ENCODE measurements at regions of chrX and their contacts with region 1.

Region 1: GRCh38 chrX:10189317-10190268 is 32.8 kb downstream of the CLCN4 start:
- DNase-seq: peak; percentile 79
- H3K4me3 ChIP-seq: no peak overlapping the region
- H3K27ac ChIP-seq: no peak overlapping the region
- H3K4me1 ChIP-seq: no peaks in the 10 kb centered on the region
- H3K27me3 ChIP-seq: no peaks in the 10 kb centered on the region
- CTCF ChIP-seq: peak; percentile 84

Region 2: DNA sequence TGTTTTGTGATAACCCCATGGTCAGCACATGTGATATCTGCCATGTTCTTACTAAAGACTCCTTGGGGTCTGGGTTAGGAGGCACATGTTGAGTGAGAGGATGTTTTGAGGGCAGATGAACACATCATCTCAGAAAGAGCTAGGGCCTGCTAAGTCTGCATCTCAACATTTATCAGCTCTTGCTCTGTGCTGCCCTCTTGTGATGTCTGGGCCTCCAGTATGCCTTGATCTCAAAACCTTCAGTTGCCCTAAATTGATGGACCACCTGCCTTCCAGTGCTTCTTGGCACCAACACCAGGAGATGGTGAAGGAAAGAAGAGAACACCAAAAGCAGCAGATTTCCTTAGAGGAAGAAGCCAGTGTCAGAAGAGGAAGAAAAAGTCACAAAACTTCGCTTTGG is 408.3 kb after region 1 on chrX:
- CTCF ChIA-PET with region 1: interaction called, 16 read pairs
- POLR2A ChIA-PET with region 1: no interaction called
- intact Hi-C with region 1: loop called (anchors 5 kb)
- DNase-seq: peak; percentile 55
- H3K4me3 ChIP-seq: no peak overlapping the region
- H3K27ac ChIP-seq: no peak overlapping the region
- H3K4me1 ChIP-seq: no peaks in the 10 kb centered on the region
- H3K27me3 ChIP-seq: no peaks in the 10 kb centered on the region
- CTCF ChIP-seq: peak; percentile 60

Region 3: DNA sequence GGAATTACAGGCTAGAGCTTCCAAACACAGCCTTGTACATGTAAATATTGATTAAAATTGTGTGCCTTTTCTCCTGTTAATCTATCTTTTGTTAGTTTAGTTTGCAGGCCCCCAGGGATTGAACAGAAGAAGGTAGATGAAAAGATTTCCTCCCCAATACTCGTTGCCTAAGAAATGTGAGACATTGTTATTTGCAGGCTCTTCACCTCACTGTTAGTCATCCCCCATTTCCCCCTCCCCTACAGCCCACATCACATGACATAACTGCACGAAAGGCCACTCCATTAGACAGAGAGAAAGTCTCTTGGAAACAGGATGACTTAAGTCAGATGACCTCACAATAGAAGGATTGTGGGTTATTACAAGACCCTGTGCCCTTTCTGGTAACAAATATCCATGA is 444.1 kb after region 1 on chrX:
- CTCF ChIA-PET with region 1: interaction called, 8 read pairs
- POLR2A ChIA-PET with region 1: no interaction called
- intact Hi-C with region 1: loop called (anchors 5 kb)
- DNase-seq: peak; percentile 45
- H3K4me3 ChIP-seq: no peak overlapping the region
- H3K27ac ChIP-seq: no peak overlapping the region
- H3K4me1 ChIP-seq: peaks cover 7% of the 10 kb centered on the region
- H3K27me3 ChIP-seq: no peaks in the 10 kb centered on the region
- CTCF ChIP-seq: no peak

Region 4: GRCh38 chrX:10769195-10769594 is 579.6 kb after region 1 on chrX:
- CTCF ChIA-PET with region 1: interaction called, 3 read pairs
- POLR2A ChIA-PET with region 1: no interaction called
- intact Hi-C with region 1: loop called (anchors 5 kb)
- DNase-seq: peak; percentile 69
- H3K4me3 ChIP-seq: peak overlapping the region; percentile 9
- H3K27ac ChIP-seq: no peak overlapping the region
- H3K4me1 ChIP-seq: no peaks in the 10 kb centered on the region
- H3K27me3 ChIP-seq: no peaks in the 10 kb centered on the region
- CTCF ChIP-seq: peak; percentile 67

Region 5: DNA sequence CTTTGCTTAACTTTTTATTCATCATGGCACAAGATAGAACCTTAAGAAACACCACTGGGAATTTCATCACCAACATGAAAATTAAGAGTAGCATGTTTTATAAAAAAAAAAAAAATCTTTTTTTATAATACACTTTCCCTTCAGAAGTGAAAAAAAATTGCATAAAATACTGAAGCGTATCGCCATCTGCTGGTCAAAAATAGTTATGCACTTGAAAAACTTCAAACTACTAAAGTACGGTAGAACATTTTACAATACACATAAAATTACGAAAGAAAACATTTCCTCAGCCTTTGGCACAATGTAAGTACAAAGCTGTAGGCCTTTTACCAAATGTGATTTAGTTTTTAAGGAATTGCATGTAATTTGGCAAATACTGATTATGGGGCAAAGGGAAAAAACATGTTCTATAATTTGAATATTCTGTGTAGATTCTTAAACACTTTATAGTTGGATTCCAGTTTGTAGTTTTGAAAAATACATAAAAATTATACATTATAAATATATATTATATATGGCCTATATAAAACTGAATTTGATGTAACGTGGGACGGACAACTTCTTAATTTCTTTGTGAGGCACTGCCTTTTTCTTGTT is 948.0 kb after region 1 on chrX:
- CTCF ChIA-PET with region 1: interaction called, 8 read pairs
- POLR2A ChIA-PET with region 1: no interaction called
- intact Hi-C with region 1: loop called (anchors 1 kb)
- DNase-seq: peak; percentile 49
- H3K4me3 ChIP-seq: no peak overlapping the region
- H3K27ac ChIP-seq: no peak overlapping the region
- H3K4me1 ChIP-seq: no peaks in the 10 kb centered on the region
- H3K27me3 ChIP-seq: no peaks in the 10 kb centered on the region
- CTCF ChIP-seq: peak; percentile 79

Measured in A673 (cell line).